Heart left ventricle (tissue), 16 donors: ENCODE measurements at regions of chr9 and their contacts with region 1.

Region 1: DNA sequence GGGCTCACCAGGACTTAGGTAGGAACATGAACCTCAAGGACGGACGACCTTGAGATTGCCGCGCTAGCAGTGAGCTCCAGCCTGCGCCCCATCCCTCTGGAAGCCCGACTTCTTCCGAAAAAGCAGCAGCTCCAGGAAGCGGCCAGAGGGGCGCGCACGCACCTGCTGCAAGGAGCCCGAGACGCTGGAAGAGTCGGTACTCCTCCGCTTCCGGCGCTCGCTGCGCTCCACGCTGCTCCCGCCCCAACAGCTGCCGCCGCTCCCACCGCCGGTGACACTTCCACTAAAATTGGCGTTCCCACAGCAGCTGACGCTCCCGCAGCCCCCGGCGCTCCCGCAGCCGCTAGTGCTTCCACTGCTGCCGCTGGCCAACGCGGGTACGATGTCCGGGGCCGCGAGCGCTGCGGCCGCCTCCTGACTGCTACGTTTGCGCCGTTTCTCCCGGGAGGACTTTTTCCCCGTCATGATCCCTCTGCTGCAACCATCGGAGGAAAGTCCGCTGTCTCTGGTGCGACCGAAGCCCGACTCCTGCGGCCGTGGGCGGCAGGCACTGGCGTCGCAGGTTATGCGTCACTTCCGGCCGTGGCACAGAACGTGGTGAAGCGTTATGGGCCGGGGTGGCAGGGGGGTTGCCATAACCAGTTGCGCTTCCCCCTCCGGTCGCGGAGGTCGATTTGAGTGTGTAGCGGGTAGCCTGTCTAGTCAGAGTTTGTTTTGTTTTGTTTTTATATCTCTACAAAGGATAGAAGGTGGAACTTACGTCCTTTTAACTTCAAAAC is at the start of gene CAAP1:
- DNase-seq: peak; percentile 94 to 97 (median 96)
- ATAC-seq: peak; percentile 97 to 99 (median 99)
- H3K4me3 ChIP-seq: peak within 1 kb of the TSS; percentile 74 to 97 (median 88)
- H3K27ac ChIP-seq: peak within 1 kb of the TSS; percentile 80 to 99 (median 94)
- H3K4me1 ChIP-seq: peaks cover 0 to 33% (median 15%) of the 10 kb centered on the region in 12 donors
- H3K27me3 ChIP-seq: no peaks in the 10 kb centered on the region
- CTCF ChIP-seq: peak in 8 of 12 donors; percentile 26 to 63 (median 36)
- POLR2A ChIP-seq: peak in 1 of 2 donors; percentile 69
- total RNA-seq, gene CAAP1: 4.8 to 10.8 (median 7.6) TPM

Region 2: DNA sequence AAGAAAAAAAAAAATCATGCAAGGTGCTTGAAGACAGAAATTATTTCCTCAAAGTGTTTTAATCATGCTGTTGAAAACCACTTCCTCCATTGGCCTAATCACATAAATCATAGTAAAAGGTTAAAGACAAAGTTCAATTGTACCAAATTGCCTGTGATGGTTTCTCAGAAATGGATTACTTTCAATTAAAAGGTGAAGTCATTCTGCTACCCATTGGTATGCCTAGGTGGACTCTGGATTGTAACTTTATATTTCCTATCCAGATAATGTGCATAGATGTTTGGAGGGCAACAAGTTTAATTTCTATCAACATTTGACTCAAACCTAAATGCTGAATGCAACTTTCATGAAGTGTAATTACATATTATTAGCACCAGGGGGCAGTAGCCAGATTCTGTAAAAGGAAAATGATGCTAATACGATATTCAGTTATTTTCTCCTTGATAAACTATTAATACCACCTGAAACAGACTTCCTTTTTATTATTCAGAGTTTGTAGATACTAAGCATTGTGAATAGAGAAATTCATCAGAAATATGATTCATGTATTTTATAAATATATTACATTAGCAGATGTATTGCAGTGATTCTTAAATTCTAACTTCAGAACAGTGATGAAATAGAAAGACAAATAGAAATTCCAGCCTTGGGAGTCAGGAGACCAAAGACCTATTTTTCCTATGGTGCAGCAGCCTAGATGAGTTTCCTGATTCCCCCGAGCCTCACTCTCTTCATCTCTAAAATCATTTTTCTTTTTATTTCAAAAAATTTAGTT is 148.1 kb before region 1 on chr9:
- intact Hi-C with region 1: no loop called
- DNase-seq: no peak
- ATAC-seq: no peak
- H3K4me3 ChIP-seq: no peak overlapping the region
- H3K27ac ChIP-seq: no peak overlapping the region
- H3K4me1 ChIP-seq: no peaks in the 10 kb centered on the region
- H3K27me3 ChIP-seq: no peaks in the 10 kb centered on the region
- CTCF ChIP-seq: peak; percentile 64 to 92 (median 82)
- POLR2A ChIP-seq: no peak

Region 3: GRCh38 chr9:26946753-26947727 is 54.6 kb after region 1 on chr9 and contains the start of gene PLAA:
- intact Hi-C with region 1: loop called (anchors 1 to 5 kb)
- DNase-seq: peak; percentile 91 to 93 (median 93)
- ATAC-seq: peak; percentile 99 to 100 (median 100)
- H3K4me3 ChIP-seq: peak within 1 kb of the TSS; percentile 81 to 99 (median 96)
- H3K27ac ChIP-seq: peak within 1 kb of the TSS; percentile 92 to 99 (median 97)
- H3K4me1 ChIP-seq: peaks cover 5 to 41% (median 28%) of the 10 kb centered on the region in 12 donors
- H3K27me3 ChIP-seq: no peaks in the 10 kb centered on the region
- CTCF ChIP-seq: peak in 3 of 12 donors; percentile 12 to 28 (median 19)
- POLR2A ChIP-seq: peak in 1 of 2 donors; percentile 54
- total RNA-seq, gene PLAA: 28.0 to 42.5 (median 34.2) TPM

Region 4: DNA sequence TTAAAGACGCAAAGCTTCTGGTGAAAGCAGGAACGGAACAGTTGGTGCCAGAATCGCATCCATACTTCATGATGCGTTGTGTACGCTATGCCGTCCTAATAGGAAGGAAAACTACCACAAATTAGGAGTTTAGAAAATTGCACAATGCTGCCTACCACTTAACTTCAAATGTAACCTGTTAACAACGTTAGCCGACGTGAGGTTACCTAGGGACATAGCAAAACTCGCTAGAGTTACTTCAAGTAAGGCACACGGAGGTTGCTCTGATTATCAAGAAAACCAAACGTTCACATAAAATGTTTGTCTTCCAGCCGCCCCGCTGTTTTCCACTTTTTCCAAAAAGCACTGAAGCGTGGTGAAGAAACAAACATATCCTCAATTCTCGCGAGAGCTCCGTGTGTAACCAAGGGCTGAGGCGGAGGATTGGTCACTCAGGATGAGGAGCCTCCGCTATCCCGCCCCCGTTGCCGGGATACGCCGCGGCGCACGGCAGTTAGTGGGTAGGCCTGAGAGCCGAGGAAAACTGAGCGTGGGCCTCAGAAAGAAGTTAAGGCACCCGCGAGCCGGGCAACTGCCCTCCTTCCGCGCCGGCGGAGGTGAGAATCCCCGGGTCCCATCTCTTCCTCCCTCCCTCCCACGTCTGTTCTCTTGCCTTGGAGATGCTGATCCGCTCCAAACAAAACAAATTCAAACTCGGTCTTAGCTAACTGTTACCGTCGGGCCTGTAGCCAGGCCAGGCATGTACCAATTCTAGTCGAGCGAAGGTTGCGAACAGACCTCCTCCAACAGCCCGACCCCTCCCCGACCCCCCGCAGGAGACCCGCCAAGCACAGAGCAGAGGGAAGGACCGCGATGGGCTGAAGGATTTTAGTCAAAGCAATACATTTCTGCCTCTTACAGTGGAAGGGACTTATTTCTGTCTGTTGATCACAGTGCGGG is 63.8 kb after region 1 on chr9 and contains the start of gene IFT74:
- intact Hi-C with region 1: loop called in 2 of 10 experiments (anchors 2 to 5 kb)
- DNase-seq: peak; percentile 98 to 99 (median 99)
- ATAC-seq: peak; percentile 100
- H3K4me3 ChIP-seq: peak within 1 kb of the TSS; percentile 40 to 78 (median 68)
- H3K27ac ChIP-seq: peak within 1 kb of the TSS; percentile 27 to 97 (median 85)
- H3K4me1 ChIP-seq: peaks cover 0 to 24% (median 8%) of the 10 kb centered on the region in 12 donors
- H3K27me3 ChIP-seq: no peaks in the 10 kb centered on the region
- CTCF ChIP-seq: no peak
- POLR2A ChIP-seq: peak in 1 of 2 donors; percentile 69
- total RNA-seq, gene IFT74: 8.3 to 12.7 (median 9.6) TPM

Region 5: GRCh38 chr9:26975693-26976059 is 83.2 kb after region 1 on chr9:
- intact Hi-C with region 1: loop called in 1 of 10 experiments (anchors 5 kb)
- DNase-seq: peak in 3 of 5 donors; percentile 18 to 30 (median 25)
- ATAC-seq: peak in 3 of 4 donors; percentile 31 to 73 (median 62)
- H3K4me3 ChIP-seq: peak overlapping the region in 1 of 12 donors; percentile 17
- H3K27ac ChIP-seq: no peak overlapping the region
- H3K4me1 ChIP-seq: peaks cover 0 to 6% (median 0%) of the 10 kb centered on the region in 12 donors
- H3K27me3 ChIP-seq: no peaks in the 10 kb centered on the region
- CTCF ChIP-seq: peak; percentile 49 to 74 (median 62)
- POLR2A ChIP-seq: no peak